ENCODE measurements at regions of chr17 and their contacts with region 1.

Region 1: DNA sequence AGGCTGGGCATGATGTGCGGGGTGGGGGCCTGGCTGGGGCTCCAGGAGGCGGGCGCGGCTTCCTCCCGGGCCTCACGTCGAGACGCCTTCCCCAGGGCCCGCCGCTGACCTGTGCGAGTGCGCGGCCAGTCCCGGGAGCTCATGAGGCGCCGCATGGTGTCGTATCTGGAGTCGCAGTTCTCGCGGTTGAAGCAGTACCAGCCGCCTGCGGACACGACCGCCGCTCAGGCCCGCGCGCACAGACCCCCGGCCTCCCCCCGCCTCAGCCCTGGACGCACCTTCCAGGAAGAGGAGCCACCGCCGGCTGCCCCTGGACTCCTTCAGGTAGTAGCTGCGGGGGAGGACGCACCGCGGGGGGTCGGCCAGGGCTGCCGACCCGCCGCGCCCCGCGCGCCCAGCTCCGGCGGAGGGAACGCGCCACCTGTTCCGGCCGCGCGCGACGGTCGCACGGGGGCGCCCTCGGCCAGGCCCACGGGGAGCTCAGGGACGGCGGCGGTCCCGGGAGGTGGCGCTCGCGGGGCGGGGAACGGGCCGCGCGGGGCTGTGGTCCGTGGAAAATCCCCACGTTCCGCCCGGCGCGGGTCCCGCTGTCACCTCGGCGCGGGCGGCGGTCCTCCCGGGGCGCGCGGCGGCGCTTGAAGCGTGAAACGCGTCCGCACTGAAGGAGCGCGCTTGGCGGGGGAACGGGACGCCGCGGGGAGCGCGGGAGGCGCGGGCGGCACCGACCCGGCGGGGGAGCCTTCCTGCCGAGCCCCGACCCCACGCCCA is 1.4 kb downstream of the NOTUM start:
- DNase-seq: peak; percentile 54 to 95 (median 78)
- ATAC-seq: peak; percentile 92 to 97 (median 93)
- H3K4me3 ChIP-seq: peak overlapping the region in 2 of 4 donors; percentile 36 to 48
- H3K27ac ChIP-seq: no peak overlapping the region
- H3K4me1 ChIP-seq: peaks cover 5 to 11% (median 5%) of the 10 kb centered on the region in 3 donors
- H3K27me3 ChIP-seq: peaks cover 0 to 9% (median 5%) of the 10 kb centered on the region in 4 donors
- CTCF ChIP-seq: peak; percentile 23 to 69 (median 60)

Region 2: GRCh38 chr17:81890447-81891299 is 68.9 kb before region 1 on chr17:
- intact Hi-C with region 1: no loop called
- DNase-seq: peak in 2 of 6 donors; percentile 15 to 64
- ATAC-seq: no peak
- H3K4me3 ChIP-seq: peak overlapping the region; percentile 83 to 94 (median 88)
- H3K27ac ChIP-seq: peak overlapping the region in 3 of 4 donors; percentile 12 to 67 (median 51)
- H3K4me1 ChIP-seq: peaks cover 0 to 17% (median 9%) of the 10 kb centered on the region in 3 donors
- H3K27me3 ChIP-seq: no peaks in the 10 kb centered on the region
- CTCF ChIP-seq: no peak

Region 3: GRCh38 chr17:82022981-82023374 is 63.4 kb after region 1 on chr17 and contains the start of gene LRRC45:
- intact Hi-C with region 1: loop called (anchors 2 to 10 kb)
- DNase-seq: peak; percentile 99 to 100 (median 100)
- ATAC-seq: peak; percentile 89 to 95 (median 91)
- H3K4me3 ChIP-seq: peak within 1 kb of the TSS; percentile 92 to 96 (median 94)
- H3K27ac ChIP-seq: peak within 1 kb of the TSS in 3 of 4 donors; percentile 50 to 58 (median 57)
- H3K4me1 ChIP-seq: peaks cover 9 to 14% (median 14%) of the 10 kb centered on the region in 3 donors
- H3K27me3 ChIP-seq: no peaks in the 10 kb centered on the region
- CTCF ChIP-seq: no peak
- total RNA-seq, gene LRRC45: 5.3 to 9.9 (median 6.2) TPM

Region 4: GRCh38 chr17:82120148-82120547 is 160.6 kb after region 1 on chr17:
- intact Hi-C with region 1: no loop called
- DNase-seq: no peak
- ATAC-seq: no peak
- H3K4me3 ChIP-seq: no peak overlapping the region
- H3K27ac ChIP-seq: no peak overlapping the region
- H3K4me1 ChIP-seq: no peaks in the 10 kb centered on the region
- H3K27me3 ChIP-seq: no peaks in the 10 kb centered on the region
- CTCF ChIP-seq: no peak